ENCODE measurements at regions of chr15 and their contacts with region 1.

Region 1: DNA sequence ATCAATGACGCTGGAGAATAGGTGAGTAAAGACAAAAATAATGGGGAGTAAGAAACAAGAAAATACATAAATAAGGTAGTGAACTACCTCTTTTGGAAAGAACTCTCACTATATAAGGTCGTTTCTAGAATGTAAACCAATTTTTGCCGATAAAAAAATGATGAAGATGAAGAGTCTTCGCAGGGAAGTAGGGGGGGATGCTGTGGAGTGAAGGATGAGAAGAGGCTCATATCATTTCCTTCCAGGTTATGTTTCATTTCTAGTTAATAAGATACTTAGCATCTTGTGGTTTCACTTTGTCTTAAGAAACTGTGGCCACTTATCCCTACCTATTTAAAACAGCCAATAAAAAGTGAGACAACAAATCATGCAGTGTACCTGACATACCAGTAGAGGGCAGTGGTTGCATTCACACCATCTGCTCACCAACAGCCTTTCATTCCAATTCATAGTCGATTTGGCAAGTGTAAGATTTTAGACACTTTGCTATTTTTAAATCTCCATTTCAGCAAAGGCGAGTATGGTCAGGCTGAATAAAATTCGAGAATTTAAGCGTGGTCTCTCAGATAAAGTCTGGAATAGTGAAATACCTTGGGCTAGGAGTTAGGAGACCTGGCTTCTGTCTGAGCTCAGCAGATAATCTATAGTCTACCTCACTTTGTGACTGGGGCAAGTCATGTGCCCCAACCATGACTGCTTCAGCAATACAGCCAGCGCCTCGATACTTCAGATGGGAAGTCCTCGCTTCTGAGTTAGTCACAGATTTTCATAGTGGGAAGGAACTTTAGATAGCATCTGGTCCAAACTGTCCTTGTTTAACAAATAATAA is 28.9 kb upstream of the ICE2 start:
- DNase-seq: peak; percentile 83
- ATAC-seq: peak; percentile 92
- H3K4me3 ChIP-seq: no peak overlapping the region
- H3K27ac ChIP-seq: peak overlapping the region; percentile 46; the same call in 1 of the 2 replicates
- H3K4me1 ChIP-seq: peaks cover 18% of the 10 kb centered on the region
- H3K27me3 ChIP-seq: no peaks in the 10 kb centered on the region
- CTCF ChIP-seq: peak; percentile 88 to 97 (median 95)
- EP300 ChIP-seq: no peak
- POLR2A ChIP-seq: no peak
- RAD21 ChIP-seq: peak; percentile 92

Region 2: GRCh38 chr15:60255390-60255789 is 252.4 kb before region 1 on chr15:
- CTCF ChIA-PET with region 1: no interaction called
- POLR2A ChIA-PET with region 1: no interaction called
- RAD21 ChIA-PET with region 1: no interaction called
- SMC1A ChIA-PET with region 1: no interaction called
- in situ Hi-C with region 1: no loop called
- intact Hi-C with region 1: no loop called
- DNase-seq: peak; percentile 30
- ATAC-seq: peak; percentile 89
- H3K4me3 ChIP-seq: no peak overlapping the region
- H3K27ac ChIP-seq: no peak overlapping the region
- H3K4me1 ChIP-seq: no peaks in the 10 kb centered on the region
- H3K27me3 ChIP-seq: peaks cover 0 to 2% of the 10 kb centered on the region in 2 experiments; a peak in 1 of 4 replicates
- CTCF ChIP-seq: no peak
- EP300 ChIP-seq: peak in 1 of 2 experiments; percentile 40; a peak in 1 of 4 replicates
- POLR2A ChIP-seq: no peak
- RAD21 ChIP-seq: no peak

Region 3: GRCh38 chr15:60526127-60526625 is 18.4 kb after region 1 on chr15:
- CTCF ChIA-PET with region 1: interaction called, 222 read pairs
- POLR2A ChIA-PET with region 1: no interaction called
- RAD21 ChIA-PET with region 1: interaction called, 43 read pairs
- SMC1A ChIA-PET with region 1: interaction called, 71 read pairs
- in situ Hi-C with region 1: no loop called
- intact Hi-C with region 1: no loop called
- DNase-seq: no peak
- ATAC-seq: no peak
- H3K4me3 ChIP-seq: no peak overlapping the region
- H3K27ac ChIP-seq: no peak overlapping the region
- H3K4me1 ChIP-seq: peaks cover 5% of the 10 kb centered on the region; the same call in 1 of the 2 replicates
- H3K27me3 ChIP-seq: no peaks in the 10 kb centered on the region
- CTCF ChIP-seq: no peak
- EP300 ChIP-seq: no peak
- POLR2A ChIP-seq: no peak
- RAD21 ChIP-seq: no peak

Region 4: GRCh38 chr15:60568301-60568742 is 60.5 kb after region 1 on chr15:
- CTCF ChIA-PET with region 1: interaction called, 13 read pairs
- POLR2A ChIA-PET with region 1: interaction called, 5 read pairs
- RAD21 ChIA-PET with region 1: interaction called, 4 read pairs
- SMC1A ChIA-PET with region 1: interaction called, 15 read pairs
- in situ Hi-C with region 1: no loop called
- intact Hi-C with region 1: no loop called
- DNase-seq: peak; percentile 87
- ATAC-seq: peak; percentile 79
- H3K4me3 ChIP-seq: peak overlapping the region; percentile 26
- H3K27ac ChIP-seq: peak overlapping the region; percentile 93
- H3K4me1 ChIP-seq: peaks cover 75% of the 10 kb centered on the region
- H3K27me3 ChIP-seq: no peaks in the 10 kb centered on the region
- CTCF ChIP-seq: no peak
- EP300 ChIP-seq: peak in 1 of 2 experiments; percentile 61; a peak in 2 of 4 replicates
- POLR2A ChIP-seq: peak; percentile 79
- RAD21 ChIP-seq: no peak

Region 5: GRCh38 chr15:60649845-60650548 is 142.2 kb after region 1 on chr15:
- CTCF ChIA-PET with region 1: interaction called, 3 read pairs
- POLR2A ChIA-PET with region 1: no interaction called
- RAD21 ChIA-PET with region 1: interaction called, 4 read pairs
- SMC1A ChIA-PET with region 1: no interaction called
- in situ Hi-C with region 1: no loop called
- intact Hi-C with region 1: loop called (anchors 10 kb)
- DNase-seq: peak; percentile 57
- ATAC-seq: peak; percentile 69
- H3K4me3 ChIP-seq: peak overlapping the region; percentile 55; the same call in 1 of the 2 replicates
- H3K27ac ChIP-seq: peak overlapping the region; percentile 84
- H3K4me1 ChIP-seq: peaks cover 42% of the 10 kb centered on the region
- H3K27me3 ChIP-seq: no peaks in the 10 kb centered on the region
- CTCF ChIP-seq: peak in 2 of 3 experiments; percentile 33 to 34; a peak in 4 of 6 replicates
- EP300 ChIP-seq: peak; percentile 77 to 89; a peak in 3 of 4 replicates
- POLR2A ChIP-seq: no peak
- RAD21 ChIP-seq: peak; percentile 77

Region 6: GRCh38 chr15:61834076-61834697 is 1326.4 kb after region 1 on chr15:
- CTCF ChIA-PET with region 1: interaction called, 3 read pairs
- POLR2A ChIA-PET with region 1: no interaction called
- RAD21 ChIA-PET with region 1: interaction called, 4 read pairs
- SMC1A ChIA-PET with region 1: no interaction called
- in situ Hi-C with region 1: loop called (anchors 25 kb)
- intact Hi-C with region 1: loop called (anchors 10 kb)
- DNase-seq: no peak
- ATAC-seq: peak; percentile 88
- H3K4me3 ChIP-seq: no peak overlapping the region
- H3K27ac ChIP-seq: no peak overlapping the region
- H3K4me1 ChIP-seq: no peaks in the 10 kb centered on the region
- H3K27me3 ChIP-seq: no peaks in the 10 kb centered on the region; a peak in 2 of 4 replicates
- CTCF ChIP-seq: peak; percentile 94 to 96 (median 96)
- EP300 ChIP-seq: no peak
- POLR2A ChIP-seq: no peak
- RAD21 ChIP-seq: peak; percentile 82

Region 7: GRCh38 chr15:62378772-62379498 is 1871.1 kb after region 1 on chr15:
- CTCF ChIA-PET with region 1: no interaction called
- POLR2A ChIA-PET with region 1: no interaction called
- RAD21 ChIA-PET with region 1: no interaction called
- SMC1A ChIA-PET with region 1: no interaction called
- in situ Hi-C with region 1: no loop called
- intact Hi-C with region 1: no loop called
- DNase-seq: no peak
- ATAC-seq: no peak
- H3K4me3 ChIP-seq: no peak overlapping the region
- H3K27ac ChIP-seq: no peak overlapping the region
- H3K4me1 ChIP-seq: no peaks in the 10 kb centered on the region
- H3K27me3 ChIP-seq: no peaks in the 10 kb centered on the region
- CTCF ChIP-seq: no peak
- EP300 ChIP-seq: no peak
- POLR2A ChIP-seq: no peak
- RAD21 ChIP-seq: no peak